ENCODE measurements at regions of chr11 and their contacts with region 1.

Region 1: GRCh38 chr11:93921695-93922468 is 71.5 kb upstream of the VSTM5 start:
- DNase-seq: peak; percentile 92
- ATAC-seq: peak; percentile 97
- H3K4me3 ChIP-seq: no peak overlapping the region
- H3K27ac ChIP-seq: no peak overlapping the region
- H3K4me1 ChIP-seq: peaks cover 4% of the 10 kb centered on the region; the same call in 1 of the 2 replicates
- H3K27me3 ChIP-seq: no peaks in the 10 kb centered on the region
- CTCF ChIP-seq: peak; percentile 91

Region 2: GRCh38 chr11:93775289-93775688 is 146.6 kb before region 1 on chr11:
- CTCF ChIA-PET with region 1: no interaction called
- POLR2A ChIA-PET with region 1: no interaction called
- intact Hi-C with region 1: no loop called
- DNase-seq: peak; percentile 48
- ATAC-seq: no peak
- H3K4me3 ChIP-seq: no peak overlapping the region
- H3K27ac ChIP-seq: no peak overlapping the region
- H3K4me1 ChIP-seq: no peaks in the 10 kb centered on the region
- H3K27me3 ChIP-seq: no peaks in the 10 kb centered on the region
- CTCF ChIP-seq: peak; percentile 69

Region 3: GRCh38 chr11:93969921-93970567 is 48.2 kb after region 1 on chr11:
- CTCF ChIA-PET with region 1: no interaction called
- POLR2A ChIA-PET with region 1: interaction called, 10 read pairs
- intact Hi-C with region 1: no loop called
- DNase-seq: no peak
- ATAC-seq: no peak
- H3K4me3 ChIP-seq: no peak overlapping the region
- H3K27ac ChIP-seq: no peak overlapping the region
- H3K4me1 ChIP-seq: no peaks in the 10 kb centered on the region
- H3K27me3 ChIP-seq: no peaks in the 10 kb centered on the region
- CTCF ChIP-seq: no peak

Region 4: GRCh38 chr11:94036096-94036495 is 114.2 kb after region 1 on chr11:
- CTCF ChIA-PET with region 1: no interaction called
- POLR2A ChIA-PET with region 1: no interaction called
- intact Hi-C with region 1: loop called (anchors 5 kb)
- DNase-seq: peak; percentile 50
- ATAC-seq: peak; percentile 81
- H3K4me3 ChIP-seq: no peak overlapping the region
- H3K27ac ChIP-seq: no peak overlapping the region
- H3K4me1 ChIP-seq: peaks cover 8% of the 10 kb centered on the region; the same call in 1 of the 2 replicates
- H3K27me3 ChIP-seq: no peaks in the 10 kb centered on the region
- CTCF ChIP-seq: peak; percentile 48

Region 5: DNA sequence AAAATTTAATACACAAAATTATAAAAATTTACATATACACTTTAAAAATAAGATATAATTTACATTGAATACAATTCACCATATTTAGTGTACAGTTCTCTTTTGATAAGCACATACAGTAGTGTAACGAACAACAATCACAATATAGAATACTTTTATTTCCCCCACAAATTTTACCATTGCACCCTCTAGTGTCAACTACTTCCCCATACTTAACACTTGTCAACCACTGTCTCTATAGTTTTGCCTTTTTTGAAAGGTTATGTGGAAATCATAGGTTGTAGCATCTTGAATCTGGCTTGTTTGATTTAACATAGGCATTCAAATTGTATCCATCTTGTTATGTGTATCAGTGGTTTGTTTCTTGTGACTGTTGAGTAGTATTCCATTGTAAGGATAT is 185.5 kb after region 1 on chr11:
- CTCF ChIA-PET with region 1: no interaction called
- POLR2A ChIA-PET with region 1: no interaction called
- intact Hi-C with region 1: loop called (anchors 1 kb)
- DNase-seq: peak; percentile 42
- ATAC-seq: peak; percentile 51
- H3K4me3 ChIP-seq: no peak overlapping the region
- H3K27ac ChIP-seq: no peak overlapping the region
- H3K4me1 ChIP-seq: no peaks in the 10 kb centered on the region
- H3K27me3 ChIP-seq: no peaks in the 10 kb centered on the region
- CTCF ChIP-seq: peak; percentile 58